ENCODE measurements at regions of chr1 and their contacts with region 1.

Region 1: DNA sequence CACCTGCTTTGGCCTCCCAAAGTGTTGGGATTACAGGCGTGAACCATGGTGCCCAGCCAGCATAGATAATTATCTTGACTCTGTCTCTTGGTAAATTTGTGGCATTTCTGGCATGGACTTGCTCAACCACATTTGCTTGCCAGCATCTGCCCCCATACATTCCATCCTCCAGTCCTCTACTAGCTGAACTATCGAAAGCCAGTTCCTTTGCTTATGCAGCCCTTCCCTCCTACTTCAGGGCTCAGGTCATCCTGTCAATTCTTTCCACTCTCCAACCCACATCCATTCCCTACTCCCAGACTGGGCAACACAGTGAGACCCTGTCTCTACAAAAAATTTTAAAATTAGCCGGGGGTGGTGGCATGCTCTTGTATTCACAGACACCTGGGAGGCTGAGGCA is 13.0 kb upstream of the UQCRHL start:
- DNase-seq: no peak
- ATAC-seq: no peak
- H3K4me3 Mint-ChIP-seq: no peak overlapping the region
- H3K27ac Mint-ChIP-seq: no peak overlapping the region
- H3K4me1 Mint-ChIP-seq: peaks cover 11% of the 10 kb centered on the region
- H3K27me3 Mint-ChIP-seq: no peaks in the 10 kb centered on the region

Region 2: DNA sequence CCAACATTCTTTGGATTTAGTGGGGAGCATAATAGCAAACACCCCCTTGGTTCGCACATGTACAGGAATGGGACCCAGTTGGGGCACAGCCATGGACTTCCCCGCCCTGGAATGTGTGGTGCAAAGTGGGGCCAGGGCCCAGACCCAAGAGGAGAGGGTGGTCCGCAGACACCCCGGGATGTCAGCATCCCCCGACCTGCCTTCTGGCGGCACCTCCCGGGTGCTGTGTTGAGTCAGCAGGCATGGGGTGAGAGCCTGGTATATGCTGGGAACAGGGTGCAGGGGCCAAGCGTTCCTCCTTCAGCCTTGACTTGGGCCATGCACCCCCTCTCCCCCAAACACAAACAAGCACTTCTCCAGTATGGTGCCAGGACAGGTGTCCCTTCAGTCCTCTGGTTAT is 34.8 kb before region 1 on chr1:
- CTCF ChIA-PET with region 1: no interaction called
- POLR2A ChIA-PET with region 1: no interaction called
- DNase-seq: no peak
- ATAC-seq: no peak
- H3K4me3 Mint-ChIP-seq: no peak overlapping the region
- H3K27ac Mint-ChIP-seq: no peak overlapping the region
- H3K4me1 Mint-ChIP-seq: no peaks in the 10 kb centered on the region
- H3K27me3 Mint-ChIP-seq: peaks cover under 1% of the 10 kb centered on the region

Region 3: DNA sequence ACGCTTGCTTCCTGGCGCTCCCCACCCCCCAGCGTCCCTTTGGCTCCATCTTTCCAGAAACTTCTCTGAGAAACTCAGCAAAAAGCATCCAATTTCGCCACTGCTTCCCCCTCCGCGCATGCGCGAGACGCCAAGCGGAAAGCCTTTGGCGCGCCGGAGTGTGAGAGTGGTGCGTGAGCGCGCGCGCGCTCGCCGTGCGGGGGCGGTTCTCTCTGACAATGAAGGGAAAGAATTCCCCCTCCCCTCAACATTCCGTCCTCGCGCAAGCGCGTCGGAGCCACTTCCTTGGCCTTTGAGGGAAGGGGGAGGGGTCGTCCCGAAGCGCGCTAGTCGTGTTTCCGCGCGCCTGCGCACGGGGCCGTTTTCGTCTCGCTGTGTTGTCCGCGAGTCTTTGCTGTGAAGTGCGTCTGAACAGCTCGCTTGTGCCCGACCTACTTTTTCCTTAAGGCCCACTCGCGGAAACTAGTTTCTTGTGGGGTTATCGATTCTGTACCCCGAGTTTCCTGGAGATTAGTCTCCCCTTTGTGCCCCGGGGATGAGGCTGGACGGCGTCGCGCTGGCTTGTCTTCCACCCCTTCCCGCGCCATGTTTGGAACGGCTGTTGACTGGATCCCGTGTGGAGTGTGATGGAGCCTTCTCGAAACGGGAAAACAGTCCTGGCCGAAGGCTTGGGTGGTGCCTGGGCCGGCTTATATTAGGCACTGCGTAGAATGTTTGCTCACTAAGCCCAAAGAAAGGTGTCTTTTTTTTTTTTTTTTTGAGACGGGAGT is 15.4 kb after region 1 on chr1:
- CTCF ChIA-PET with region 1: interaction called, 36 read pairs
- POLR2A ChIA-PET with region 1: interaction called, 26 read pairs
- DNase-seq: peak; percentile 99
- ATAC-seq: peak; percentile 61
- H3K4me3 Mint-ChIP-seq: peak overlapping the region; percentile 87
- H3K27ac Mint-ChIP-seq: peak overlapping the region; percentile 98
- H3K4me1 Mint-ChIP-seq: peaks cover 33% of the 10 kb centered on the region
- H3K27me3 Mint-ChIP-seq: no peaks in the 10 kb centered on the region

Region 4: DNA sequence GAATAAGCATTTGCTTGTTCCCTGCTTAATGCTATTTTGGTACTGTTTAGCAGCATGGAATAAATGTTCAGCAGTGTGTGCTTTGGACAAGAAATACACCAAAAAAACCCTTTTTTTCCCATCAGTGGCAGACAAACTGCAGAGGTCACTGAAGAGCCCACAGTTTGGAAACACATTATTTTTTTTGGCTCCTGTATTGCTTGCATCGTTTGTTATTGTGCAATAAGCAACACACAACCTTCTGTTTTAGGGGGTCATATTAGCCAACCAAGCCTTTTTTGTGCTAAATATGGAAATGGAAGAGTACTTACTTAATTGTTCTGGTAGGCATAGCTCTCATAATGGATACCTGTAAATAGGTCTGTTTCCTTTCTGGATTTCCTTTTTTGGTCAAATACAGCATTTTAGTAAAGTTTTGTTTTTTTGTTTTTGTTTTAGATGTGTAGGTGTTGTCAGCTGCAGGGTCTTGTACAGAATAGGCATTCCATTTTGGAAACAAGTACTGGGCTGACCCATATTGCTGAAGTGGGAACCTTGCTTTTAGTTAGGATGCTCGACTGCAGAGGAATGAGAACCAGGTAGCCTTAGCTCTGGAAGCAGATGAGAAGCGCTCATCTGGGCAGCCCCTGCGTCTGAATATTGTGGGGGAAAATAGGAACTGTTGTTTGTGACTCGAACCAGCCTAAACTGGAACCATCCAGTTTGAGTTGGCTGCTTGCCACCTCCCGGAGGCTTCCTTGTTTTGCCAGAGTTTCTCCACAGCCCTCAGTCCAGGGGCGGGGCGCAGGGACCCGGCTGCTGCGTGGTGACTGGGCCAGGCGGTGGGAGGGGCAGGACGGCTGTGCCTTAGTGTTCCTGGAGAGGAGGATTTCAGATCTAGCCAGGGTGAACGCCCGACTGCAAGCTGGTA is 65.5 kb after region 1 on chr1:
- CTCF ChIA-PET with region 1: interaction called, 11 read pairs
- POLR2A ChIA-PET with region 1: no interaction called
- DNase-seq: peak; percentile 39
- ATAC-seq: peak; percentile 63
- H3K4me3 Mint-ChIP-seq: no peak overlapping the region
- H3K27ac Mint-ChIP-seq: no peak overlapping the region
- H3K4me1 Mint-ChIP-seq: peaks cover 43% of the 10 kb centered on the region
- H3K27me3 Mint-ChIP-seq: no peaks in the 10 kb centered on the region

Region 5: GRCh38 chr1:15916417-15916816 is 95.9 kb after region 1 on chr1:
- CTCF ChIA-PET with region 1: interaction called, 15 read pairs
- POLR2A ChIA-PET with region 1: no interaction called
- DNase-seq: no peak
- ATAC-seq: peak; percentile 29
- H3K4me3 Mint-ChIP-seq: peak overlapping the region; percentile 43
- H3K27ac Mint-ChIP-seq: peak overlapping the region; percentile 66
- H3K4me1 Mint-ChIP-seq: peaks cover 41% of the 10 kb centered on the region
- H3K27me3 Mint-ChIP-seq: no peaks in the 10 kb centered on the region

Region 6: GRCh38 chr1:15994590-15995351 is 174.3 kb after region 1 on chr1:
- CTCF ChIA-PET with region 1: interaction called, 16 read pairs
- POLR2A ChIA-PET with region 1: no interaction called
- DNase-seq: peak; percentile 51
- ATAC-seq: peak; percentile 63
- H3K4me3 Mint-ChIP-seq: no peak overlapping the region
- H3K27ac Mint-ChIP-seq: no peak overlapping the region
- H3K4me1 Mint-ChIP-seq: no peaks in the 10 kb centered on the region
- H3K27me3 Mint-ChIP-seq: peaks cover 2% of the 10 kb centered on the region

Measured in activated CD8-positive, alpha-beta T cell treated with anti-CD3 and anti-CD28 coated beads, Interleukin-2, amount 10 ng/mL, durations not matched to agents 7 days and 5 days (primary cell).